Left cardiac atrium (tissue), 4 donors: ENCODE measurements at regions of chr14 and their contacts with region 1.

Region 1: DNA sequence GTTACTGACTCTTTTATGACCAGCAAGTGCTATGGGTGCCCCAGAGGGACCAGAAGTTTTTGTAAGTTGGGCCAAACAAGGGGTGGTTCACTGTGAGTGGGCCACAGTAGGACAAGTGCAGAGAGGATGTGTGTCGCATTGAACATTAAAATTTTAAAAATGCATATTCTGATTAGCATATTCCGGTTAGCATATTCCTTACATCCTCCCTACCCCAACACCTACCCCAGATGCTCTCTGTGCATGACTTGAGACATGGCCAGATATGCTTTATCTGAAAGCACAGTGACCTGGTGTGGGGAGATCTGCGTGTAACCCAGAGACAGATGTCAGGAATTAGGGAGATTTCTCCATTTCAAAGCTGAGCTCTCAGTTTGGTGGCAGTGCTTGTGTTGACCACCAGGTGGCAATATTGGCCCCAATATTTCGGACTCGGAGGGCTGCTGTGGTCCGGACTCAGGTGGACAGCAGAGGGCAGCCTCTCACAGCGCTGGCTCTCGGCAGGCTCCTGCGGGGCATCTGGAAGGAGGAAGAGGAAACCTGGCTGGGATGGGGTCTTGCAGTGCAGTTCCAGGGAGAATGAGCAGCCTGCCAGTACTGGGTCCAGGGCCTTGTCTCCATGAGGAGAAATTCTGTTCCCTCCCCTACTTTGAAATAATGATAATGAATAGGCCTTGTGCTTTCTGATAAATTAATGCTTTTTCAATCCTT is 1.6 kb upstream of the CEBPE start:
- DNase-seq: peak; percentile 93
- ATAC-seq: peak; percentile 84 to 86

Region 2: GRCh38 chr14:23076785-23077408 is 43.8 kb before region 1 on chr14:
- intact Hi-C with region 1: no loop called
- DNase-seq: no peak
- ATAC-seq: no peak

Region 3: DNA sequence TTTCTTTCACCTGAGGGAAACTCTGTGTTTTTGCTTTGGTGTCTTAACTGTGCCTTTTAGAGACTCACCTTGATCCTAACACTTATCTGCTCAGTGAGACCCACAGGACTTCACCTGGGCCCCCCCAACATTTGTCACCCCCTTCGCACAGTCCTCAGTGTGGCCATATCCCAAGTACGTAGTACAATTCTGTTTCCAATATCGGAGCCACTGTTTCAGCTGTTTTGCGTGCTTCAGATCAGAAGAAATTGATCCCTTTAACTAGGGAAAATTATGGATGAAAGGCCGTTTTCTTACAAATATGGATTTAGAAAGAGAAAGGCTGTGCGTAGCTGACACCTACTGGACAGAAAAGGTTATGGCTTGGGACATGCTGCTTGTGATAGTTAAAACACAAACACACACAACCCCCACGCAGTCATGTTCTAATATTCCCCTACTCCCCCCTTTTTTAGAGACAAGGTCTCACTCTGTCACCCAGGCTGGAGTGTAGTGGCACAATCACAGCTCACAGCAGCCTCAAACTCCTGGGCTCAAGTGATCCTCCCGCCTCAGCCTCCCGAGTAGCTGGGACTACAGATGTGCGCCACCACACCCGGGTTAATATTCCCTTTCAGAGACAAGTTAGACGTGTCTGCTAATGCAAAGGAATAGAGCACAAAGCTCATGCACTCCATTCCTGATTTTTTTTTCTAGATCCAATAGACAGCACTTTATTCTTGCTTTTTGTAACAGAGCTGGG is 66.4 kb after region 1 on chr14:
- intact Hi-C with region 1: loop called (anchors 1 to 2 kb)
- DNase-seq: no peak
- ATAC-seq: peak; percentile 50 to 56

Region 4: GRCh38 chr14:23294734-23295561 is 174.3 kb after region 1 on chr14:
- intact Hi-C with region 1: loop called in 1 of 2 experiments (anchors 5 kb)
- DNase-seq: peak; percentile 54
- ATAC-seq: peak; percentile 62 to 68